Left colon (tissue), 2 donors: ENCODE measurements at regions of chr15 and their contacts with region 1.

Region 1: GRCh38 chr15:89358755-89359439 is 24.3 kb upstream of the POLG start:
- DNase-seq: peak; percentile 33 to 76
- ATAC-seq: peak; percentile 90

Region 2: GRCh38 chr15:89430530-89431341 is 71.8 kb after region 1 on chr15:
- intact Hi-C with region 1: loop called (anchors 2 to 5 kb)
- DNase-seq: peak; percentile 56 to 92
- ATAC-seq: peak; percentile 95